ENCODE measurements at regions of chr4 and their contacts with region 1.

Region 1: GRCh38 chr4:165131247-165131832 is 18.7 kb upstream of the TMEM192 start:
- DNase-seq: peak; percentile 82
- ATAC-seq: peak; percentile 84
- H3K4me3 ChIP-seq: no peak overlapping the region
- H3K4me3 Mint-ChIP-seq: no peak overlapping the region
- H3K27ac ChIP-seq: no peak overlapping the region
- H3K27ac Mint-ChIP-seq: no peak overlapping the region
- H3K4me1 ChIP-seq: peaks cover 40 to 41% of the 10 kb centered on the region in 2 donors
- H3K4me1 Mint-ChIP-seq: peaks cover 36% of the 10 kb centered on the region
- H3K27me3 ChIP-seq: no peaks in the 10 kb centered on the region
- H3K27me3 Mint-ChIP-seq: no peaks in the 10 kb centered on the region
- CTCF ChIP-seq: peak; percentile 92

Region 2: GRCh38 chr4:164313853-164314252 is 817.5 kb before region 1 on chr4:
- CTCF ChIA-PET with region 1: no interaction called
- POLR2A ChIA-PET with region 1: no interaction called
- intact Hi-C with region 1: no loop called
- DNase-seq: no peak
- ATAC-seq: no peak
- H3K4me3 ChIP-seq: no peak overlapping the region
- H3K4me3 Mint-ChIP-seq: no peak overlapping the region
- H3K27ac ChIP-seq: no peak overlapping the region
- H3K27ac Mint-ChIP-seq: no peak overlapping the region
- H3K4me1 ChIP-seq: no peaks in the 10 kb centered on the region
- H3K4me1 Mint-ChIP-seq: no peaks in the 10 kb centered on the region
- H3K27me3 ChIP-seq: no peaks in the 10 kb centered on the region
- H3K27me3 Mint-ChIP-seq: no peaks in the 10 kb centered on the region
- CTCF ChIP-seq: no peak

Region 3: DNA sequence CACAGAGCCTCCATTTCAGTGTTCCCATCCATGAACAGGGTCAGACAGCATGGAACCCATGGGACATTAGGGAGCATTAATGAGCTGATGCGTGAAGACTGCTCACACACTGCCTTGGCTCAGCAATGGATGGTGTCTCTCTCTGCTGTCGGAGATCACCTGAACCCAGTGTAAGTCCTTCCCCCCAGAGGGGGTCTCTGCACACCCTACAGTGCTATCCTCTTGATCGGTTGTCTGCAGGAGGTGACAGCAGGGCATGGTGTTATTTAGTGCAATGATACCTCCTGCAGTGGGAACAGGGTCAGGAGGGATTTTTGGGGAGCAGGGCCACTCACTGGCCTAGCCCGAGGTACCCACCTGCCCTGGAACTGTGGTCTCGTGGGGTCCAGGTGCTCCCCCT is 228.7 kb before region 1 on chr4:
- CTCF ChIA-PET with region 1: no interaction called
- POLR2A ChIA-PET with region 1: no interaction called
- intact Hi-C with region 1: no loop called
- DNase-seq: no peak
- ATAC-seq: no peak
- H3K4me3 ChIP-seq: no peak overlapping the region
- H3K4me3 Mint-ChIP-seq: no peak overlapping the region
- H3K27ac ChIP-seq: no peak overlapping the region
- H3K27ac Mint-ChIP-seq: no peak overlapping the region
- H3K4me1 ChIP-seq: no peaks in the 10 kb centered on the region
- H3K4me1 Mint-ChIP-seq: no peaks in the 10 kb centered on the region
- H3K27me3 ChIP-seq: no peaks in the 10 kb centered on the region
- H3K27me3 Mint-ChIP-seq: peaks cover 3% of the 10 kb centered on the region
- CTCF ChIP-seq: no peak

Region 4: DNA sequence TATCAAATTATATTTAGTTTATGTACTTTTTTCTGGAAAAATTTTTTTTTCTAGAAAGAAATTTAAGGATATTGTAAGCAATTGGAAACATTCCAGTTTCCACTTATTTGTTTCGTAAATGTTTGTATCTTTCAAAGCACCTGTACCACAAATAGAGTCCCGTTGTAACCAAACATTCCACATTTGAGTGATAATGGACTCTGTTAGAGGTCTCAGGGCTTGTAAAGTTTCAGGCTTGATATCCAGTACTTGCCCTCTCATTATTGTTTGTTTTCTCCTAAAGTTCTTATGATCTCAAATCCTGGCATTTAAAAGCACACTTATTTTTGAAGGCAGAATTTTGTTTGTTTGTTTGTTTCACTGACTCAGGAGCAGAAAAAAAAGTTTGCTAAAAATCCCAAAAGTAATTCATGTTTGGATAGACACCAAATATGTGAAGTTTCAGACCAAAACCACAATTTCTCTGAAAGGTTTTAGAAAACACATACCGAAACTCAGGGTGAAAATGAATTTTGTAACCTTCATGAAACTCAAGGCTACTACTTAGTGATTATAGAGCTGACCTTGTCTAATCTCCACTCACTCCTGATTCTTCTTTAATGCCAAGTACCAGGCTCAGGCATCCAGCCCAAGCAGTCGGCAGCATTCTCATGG is 13.0 kb before region 1 on chr4:
- CTCF ChIA-PET with region 1: interaction called, 24 read pairs
- POLR2A ChIA-PET with region 1: no interaction called
- intact Hi-C with region 1: no loop called
- DNase-seq: no peak
- ATAC-seq: no peak
- H3K4me3 ChIP-seq: no peak overlapping the region
- H3K4me3 Mint-ChIP-seq: no peak overlapping the region
- H3K27ac ChIP-seq: no peak overlapping the region
- H3K27ac Mint-ChIP-seq: no peak overlapping the region
- H3K4me1 ChIP-seq: peaks cover 0 to 1% of the 10 kb centered on the region in 2 donors
- H3K4me1 Mint-ChIP-seq: no peaks in the 10 kb centered on the region
- H3K27me3 ChIP-seq: peaks cover 0 to 3% (median 0%) of the 10 kb centered on the region in 4 experiments
- H3K27me3 Mint-ChIP-seq: peaks cover 13% of the 10 kb centered on the region
- CTCF ChIP-seq: no peak

Region 5: DNA sequence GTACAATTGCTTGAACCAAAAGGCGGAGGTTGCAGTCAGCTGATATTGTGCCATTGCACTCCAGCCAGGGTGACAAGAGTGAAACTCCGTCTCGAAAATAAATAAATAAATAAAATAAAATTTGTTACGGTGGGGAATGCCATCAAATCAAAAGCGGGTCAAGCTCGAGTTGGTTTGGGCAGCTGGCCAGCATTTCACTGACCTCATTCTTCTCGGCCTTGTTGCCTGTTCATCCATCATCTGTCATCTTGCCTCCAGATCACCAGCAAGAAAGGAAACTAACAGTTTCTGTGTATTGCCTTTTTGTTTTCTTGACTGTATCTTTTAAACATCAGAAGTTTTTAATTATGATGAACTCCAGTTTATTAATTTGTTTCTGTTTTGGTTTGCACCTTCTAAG is 44.5 kb after region 1 on chr4:
- CTCF ChIA-PET with region 1: no interaction called
- POLR2A ChIA-PET with region 1: no interaction called
- intact Hi-C with region 1: no loop called
- DNase-seq: no peak
- ATAC-seq: no peak
- H3K4me3 ChIP-seq: no peak overlapping the region
- H3K4me3 Mint-ChIP-seq: no peak overlapping the region
- H3K27ac ChIP-seq: no peak overlapping the region
- H3K27ac Mint-ChIP-seq: no peak overlapping the region
- H3K4me1 ChIP-seq: peaks cover 9 to 11% of the 10 kb centered on the region in 2 donors
- H3K4me1 Mint-ChIP-seq: peaks cover 8% of the 10 kb centered on the region
- H3K27me3 ChIP-seq: no peaks in the 10 kb centered on the region
- H3K27me3 Mint-ChIP-seq: peaks cover 11% of the 10 kb centered on the region
- CTCF ChIP-seq: no peak

Region 6: DNA sequence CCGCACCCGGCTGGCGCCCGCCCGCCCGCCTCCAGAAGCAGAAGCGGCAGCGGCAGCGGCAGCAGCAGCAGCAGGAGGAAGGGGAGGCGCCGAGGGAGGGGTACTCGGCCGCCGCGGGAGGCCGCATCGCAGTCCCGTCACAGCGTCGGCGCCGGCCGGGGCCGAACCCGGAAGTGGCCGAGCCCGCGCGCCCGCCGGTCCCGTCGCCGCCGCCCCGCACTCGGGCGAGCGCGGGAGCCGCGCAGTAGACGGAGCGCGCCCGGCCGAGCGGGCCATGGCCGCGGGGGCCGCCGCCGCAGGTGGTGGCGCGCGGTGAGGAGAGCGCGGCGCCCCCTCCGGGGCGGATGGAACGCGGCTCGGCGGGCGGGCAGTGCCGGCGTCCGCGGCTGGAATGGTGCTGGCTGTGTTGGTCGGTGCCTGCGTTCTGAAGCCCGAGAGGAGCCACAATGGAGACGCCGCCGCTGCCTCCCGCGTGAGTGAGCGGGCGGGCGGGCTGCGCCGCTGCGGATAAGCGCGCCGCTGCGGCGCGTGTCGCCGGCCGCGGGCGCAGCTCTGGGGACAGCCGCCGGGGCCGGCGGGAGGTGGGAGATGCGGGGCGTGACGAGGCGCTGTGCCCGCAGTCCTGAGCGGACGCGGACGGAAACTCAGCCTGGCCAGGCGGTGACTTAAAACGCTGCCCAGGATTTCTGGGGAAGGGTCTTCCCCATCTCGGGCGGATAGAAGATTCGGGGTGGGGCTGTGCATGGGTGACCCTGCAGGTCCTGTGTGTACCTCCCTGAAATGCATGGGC is 76.3 kb after region 1 on chr4 and contains the start of gene KLHL2:
- CTCF ChIA-PET with region 1: interaction called, 10 read pairs
- POLR2A ChIA-PET with region 1: no interaction called
- intact Hi-C with region 1: loop called (anchors 5 kb)
- DNase-seq: peak; percentile 88
- ATAC-seq: peak; percentile 88
- H3K4me3 ChIP-seq: peak within 1 kb of the TSS; percentile 73 to 91 (median 80)
- H3K4me3 Mint-ChIP-seq: peak within 1 kb of the TSS; percentile 95
- H3K27ac ChIP-seq: peak within 1 kb of the TSS; percentile 57 to 73
- H3K27ac Mint-ChIP-seq: peak within 1 kb of the TSS; percentile 93
- H3K4me1 ChIP-seq: peaks cover 36 to 39% of the 10 kb centered on the region in 2 donors
- H3K4me1 Mint-ChIP-seq: peaks cover 65% of the 10 kb centered on the region
- H3K27me3 ChIP-seq: no peaks in the 10 kb centered on the region
- H3K27me3 Mint-ChIP-seq: no peaks in the 10 kb centered on the region
- CTCF ChIP-seq: no peak
- total RNA-seq, gene KLHL2: 76.2 and 77.5 TPM in 2 replicates

Region 7: DNA sequence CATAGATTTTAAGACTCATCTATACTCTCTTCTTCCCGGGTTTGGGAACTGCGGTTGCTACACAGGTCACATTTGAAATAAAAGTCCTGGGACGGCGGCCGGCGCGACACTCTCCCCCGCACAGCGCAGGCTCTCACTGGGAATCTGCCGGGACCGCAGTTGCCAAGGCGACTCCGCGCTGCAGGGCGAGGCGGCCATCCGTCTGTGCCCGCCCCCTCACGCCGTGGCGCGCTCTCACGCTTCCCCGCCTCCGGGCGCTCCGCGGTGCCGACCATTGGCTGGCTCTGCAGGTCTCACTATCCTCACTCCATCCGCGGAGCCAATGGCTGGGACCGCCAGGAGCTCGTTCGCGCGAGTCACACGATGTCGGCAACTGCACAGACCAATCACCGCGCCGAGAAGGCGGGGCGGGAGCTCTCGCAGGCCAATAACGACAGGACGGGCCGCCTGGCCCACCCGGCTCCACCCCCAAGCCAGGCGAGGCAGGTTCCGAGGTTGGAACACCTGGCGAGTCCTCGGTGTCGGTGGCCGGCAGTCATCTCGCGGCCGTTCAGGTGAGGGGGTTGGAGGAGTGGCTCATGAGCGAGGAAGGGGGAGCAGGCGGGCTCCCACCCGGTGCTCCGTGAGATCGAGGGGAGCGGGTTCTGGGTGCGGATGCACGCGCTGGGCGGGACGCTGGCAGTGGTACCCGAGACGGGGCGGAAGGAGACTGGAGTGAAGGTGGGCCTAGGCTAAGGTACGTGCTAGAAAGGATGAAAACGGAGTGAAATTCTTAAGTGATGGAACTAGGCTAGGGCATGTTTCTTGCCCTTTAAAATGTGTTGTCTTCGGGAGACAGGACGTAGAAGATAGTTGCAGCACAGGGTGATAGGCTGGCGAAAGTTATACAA is 196.1 kb after region 1 on chr4 and contains the start of gene MSMO1:
- CTCF ChIA-PET with region 1: interaction called, 12 read pairs
- POLR2A ChIA-PET with region 1: no interaction called
- intact Hi-C with region 1: loop called (anchors 5 kb)
- DNase-seq: peak; percentile 99
- ATAC-seq: peak; percentile 96
- H3K4me3 ChIP-seq: peak within 1 kb of the TSS; percentile 66 to 92 (median 86)
- H3K4me3 Mint-ChIP-seq: no peak within 1 kb of the TSS
- H3K27ac ChIP-seq: peak within 1 kb of the TSS; percentile 59 to 93
- H3K27ac Mint-ChIP-seq: no peak within 1 kb of the TSS
- H3K4me1 ChIP-seq: peaks cover 22 to 26% of the 10 kb centered on the region in 2 donors
- H3K4me1 Mint-ChIP-seq: peaks cover 30% of the 10 kb centered on the region
- H3K27me3 ChIP-seq: no peaks in the 10 kb centered on the region
- H3K27me3 Mint-ChIP-seq: no peaks in the 10 kb centered on the region
- CTCF ChIP-seq: no peak
- total RNA-seq, gene MSMO1: 30.8 and 34.6 TPM in 2 replicates

Region 8: DNA sequence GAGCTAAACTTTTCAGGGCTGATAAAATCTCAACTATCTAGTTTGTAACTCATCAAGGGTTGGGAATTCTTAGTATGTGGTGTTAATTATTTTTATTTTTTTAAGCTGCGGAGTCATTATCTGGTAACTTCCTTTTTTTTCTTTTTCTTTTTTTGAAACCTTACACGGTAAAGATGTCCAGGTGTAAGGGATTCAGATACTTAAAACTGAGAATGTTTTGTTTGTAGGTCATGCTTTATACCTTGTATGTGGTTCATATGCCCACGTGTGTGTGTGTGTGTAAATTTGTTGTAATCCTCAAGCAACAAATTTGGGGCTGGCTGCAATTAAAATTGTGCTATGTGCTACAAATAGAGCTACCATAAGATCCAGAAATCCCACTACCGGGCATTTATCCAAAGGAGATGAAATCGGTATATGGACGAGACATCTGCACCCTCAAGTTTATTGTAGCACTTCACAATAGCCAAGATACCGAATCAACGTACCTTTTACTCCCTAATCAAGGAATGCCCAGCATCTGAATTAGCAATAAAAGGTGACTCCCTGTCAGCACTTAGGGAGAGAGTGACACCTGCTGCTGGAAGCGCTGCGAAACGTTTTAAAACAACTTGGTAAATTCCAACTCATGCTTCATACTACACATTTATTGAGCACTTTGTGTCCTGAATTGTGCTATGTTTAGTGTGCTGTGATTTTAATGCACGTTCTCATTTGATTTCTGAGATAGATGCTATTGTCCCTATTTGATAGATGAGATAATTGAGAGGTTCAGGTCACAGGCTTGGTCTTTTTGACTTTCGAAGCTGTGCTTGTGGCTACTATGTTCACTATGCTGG is 212.2 kb after region 1 on chr4:
- CTCF ChIA-PET with region 1: interaction called, 96 read pairs
- POLR2A ChIA-PET with region 1: no interaction called
- intact Hi-C with region 1: loop called (anchors 1 kb)
- DNase-seq: peak; percentile 44
- ATAC-seq: no peak
- H3K4me3 ChIP-seq: no peak overlapping the region
- H3K4me3 Mint-ChIP-seq: no peak overlapping the region
- H3K27ac ChIP-seq: peak overlapping the region in 1 of 2 donors; percentile 2
- H3K27ac Mint-ChIP-seq: no peak overlapping the region
- H3K4me1 ChIP-seq: no peaks in the 10 kb centered on the region
- H3K4me1 Mint-ChIP-seq: peaks cover 2% of the 10 kb centered on the region
- H3K27me3 ChIP-seq: no peaks in the 10 kb centered on the region
- H3K27me3 Mint-ChIP-seq: no peaks in the 10 kb centered on the region
- CTCF ChIP-seq: peak; percentile 35

Region 9: DNA sequence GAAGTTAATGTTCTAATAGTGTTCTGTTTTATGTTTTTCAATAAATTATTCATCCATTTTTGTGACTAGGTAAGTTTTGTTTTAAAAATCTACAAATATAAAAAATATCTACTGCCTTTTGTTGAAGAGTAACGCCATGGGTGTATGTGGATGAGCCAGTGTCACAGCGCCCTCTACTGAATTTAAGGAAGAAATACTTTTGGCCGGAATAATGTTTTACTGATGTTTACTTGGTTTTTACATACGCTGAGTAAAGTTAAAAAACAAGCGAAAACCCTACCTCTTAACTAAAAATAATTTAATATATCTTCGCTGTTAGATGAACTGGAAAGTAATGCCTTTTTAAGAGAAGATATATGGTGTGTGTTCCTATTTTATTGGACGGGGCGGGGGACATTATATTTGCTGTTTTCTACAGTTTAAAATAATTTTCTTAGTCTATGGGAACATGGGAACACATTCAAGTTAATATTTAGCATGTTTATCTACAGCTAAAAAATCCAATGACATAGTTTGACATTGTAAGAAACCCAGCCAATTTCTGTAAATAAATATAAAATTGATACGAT is 333.6 kb after region 1 on chr4:
- CTCF ChIA-PET with region 1: interaction called, 89 read pairs
- POLR2A ChIA-PET with region 1: no interaction called
- intact Hi-C with region 1: loop called (anchors 1 kb)
- DNase-seq: peak; percentile 60
- ATAC-seq: peak; percentile 45
- H3K4me3 ChIP-seq: no peak overlapping the region
- H3K4me3 Mint-ChIP-seq: no peak overlapping the region
- H3K27ac ChIP-seq: no peak overlapping the region
- H3K27ac Mint-ChIP-seq: no peak overlapping the region
- H3K4me1 ChIP-seq: no peaks in the 10 kb centered on the region
- H3K4me1 Mint-ChIP-seq: no peaks in the 10 kb centered on the region
- H3K27me3 ChIP-seq: peaks cover 0 to 3% (median 0%) of the 10 kb centered on the region in 4 experiments
- H3K27me3 Mint-ChIP-seq: peaks cover 8% of the 10 kb centered on the region
- CTCF ChIP-seq: peak; percentile 92

Region 10: DNA sequence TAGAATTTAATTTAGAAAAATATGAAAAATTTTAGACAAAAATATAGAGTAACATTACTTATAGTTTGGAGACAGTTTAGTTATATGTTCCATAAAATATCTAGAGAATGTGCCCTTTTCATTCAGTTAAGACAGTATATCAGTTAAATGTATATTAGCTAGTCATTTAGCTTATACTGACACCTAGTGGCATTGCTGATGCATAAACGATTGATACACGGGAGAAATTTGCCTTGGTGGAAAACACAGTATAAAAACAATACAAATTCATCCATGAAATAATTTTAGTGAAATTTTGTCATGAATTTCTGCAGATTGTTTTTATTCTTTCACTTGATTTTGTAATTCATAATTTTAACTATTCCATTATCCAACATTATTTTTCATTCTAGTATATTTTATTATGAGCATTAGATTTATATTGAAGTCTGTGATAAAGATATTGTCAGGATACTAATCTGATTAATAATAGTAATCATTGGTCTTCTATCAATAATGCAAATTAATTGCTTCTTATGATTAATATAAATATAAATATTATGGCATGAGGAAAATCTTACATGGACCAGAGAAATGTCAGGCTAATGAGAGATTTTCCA is 960.7 kb after region 1 on chr4:
- CTCF ChIA-PET with region 1: interaction called, 4 read pairs
- POLR2A ChIA-PET with region 1: no interaction called
- intact Hi-C with region 1: loop called (anchors 5 kb)
- DNase-seq: peak; percentile 18
- ATAC-seq: no peak
- H3K4me3 ChIP-seq: no peak overlapping the region
- H3K4me3 Mint-ChIP-seq: no peak overlapping the region
- H3K27ac ChIP-seq: no peak overlapping the region
- H3K27ac Mint-ChIP-seq: no peak overlapping the region
- H3K4me1 ChIP-seq: no peaks in the 10 kb centered on the region
- H3K4me1 Mint-ChIP-seq: no peaks in the 10 kb centered on the region
- H3K27me3 ChIP-seq: no peaks in the 10 kb centered on the region
- H3K27me3 Mint-ChIP-seq: no peaks in the 10 kb centered on the region
- CTCF ChIP-seq: peak; percentile 65